ENCODE measurements at regions of chrX and their contacts with region 1.

Region 1: DNA sequence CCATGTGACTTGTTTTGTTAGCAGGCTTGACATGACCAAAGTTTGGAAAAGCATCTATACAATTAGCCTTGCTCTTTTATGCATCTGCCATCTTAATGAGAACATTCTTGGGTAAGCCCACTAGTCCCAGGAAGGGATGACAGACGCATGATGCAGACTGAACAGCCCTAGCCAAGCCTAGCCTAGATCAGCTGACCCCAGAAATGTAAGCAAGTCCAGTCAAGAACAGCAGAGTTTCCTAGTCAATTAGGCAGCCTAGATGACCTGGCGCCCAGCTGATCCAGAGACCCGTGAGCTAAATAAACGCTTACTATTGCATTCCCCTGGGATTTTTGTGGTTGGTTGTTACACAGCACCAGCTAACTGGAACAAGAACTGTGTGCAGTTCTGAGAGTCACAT is 457.9 kb downstream of the BCOR start:
- DNase-seq: no peak
- ATAC-seq: no peak
- H3K4me3 ChIP-seq: no peak overlapping the region
- H3K27ac ChIP-seq: no peak overlapping the region
- H3K4me1 ChIP-seq: no peaks in the 10 kb centered on the region; the same call in 1 of the 2 replicates
- H3K27me3 ChIP-seq: no peaks in the 10 kb centered on the region
- CTCF ChIP-seq: no peak
- EP300 ChIP-seq: no peak
- POLR2A ChIP-seq: no peak
- RAD21 ChIP-seq: no peak

Region 2: GRCh38 chrX:38664285-38664684 is 975.6 kb before region 1 on chrX:
- CTCF ChIA-PET with region 1: no interaction called
- POLR2A ChIA-PET with region 1: no interaction called
- RAD21 ChIA-PET with region 1: no interaction called
- SMC1A ChIA-PET with region 1: no interaction called
- in situ Hi-C with region 1: no loop called
- intact Hi-C with region 1: loop called (anchors 5 kb)
- DNase-seq: no peak
- ATAC-seq: peak; percentile 54
- H3K4me3 ChIP-seq: no peak overlapping the region
- H3K27ac ChIP-seq: no peak overlapping the region
- H3K4me1 ChIP-seq: peaks cover 8% of the 10 kb centered on the region; the same call in 1 of the 2 replicates
- H3K27me3 ChIP-seq: no peaks in the 10 kb centered on the region; a peak in 1 of 4 replicates
- CTCF ChIP-seq: peak; percentile 25 to 56 (median 33); a peak in 3 of 6 replicates
- EP300 ChIP-seq: no peak
- POLR2A ChIP-seq: no peak
- RAD21 ChIP-seq: peak; percentile 57

Measured in GM12878 (cell line).